Lower lobe of right lung (tissue), 2 donors: ENCODE measurements at regions of chr10 and their contacts with region 1.

Region 1: DNA sequence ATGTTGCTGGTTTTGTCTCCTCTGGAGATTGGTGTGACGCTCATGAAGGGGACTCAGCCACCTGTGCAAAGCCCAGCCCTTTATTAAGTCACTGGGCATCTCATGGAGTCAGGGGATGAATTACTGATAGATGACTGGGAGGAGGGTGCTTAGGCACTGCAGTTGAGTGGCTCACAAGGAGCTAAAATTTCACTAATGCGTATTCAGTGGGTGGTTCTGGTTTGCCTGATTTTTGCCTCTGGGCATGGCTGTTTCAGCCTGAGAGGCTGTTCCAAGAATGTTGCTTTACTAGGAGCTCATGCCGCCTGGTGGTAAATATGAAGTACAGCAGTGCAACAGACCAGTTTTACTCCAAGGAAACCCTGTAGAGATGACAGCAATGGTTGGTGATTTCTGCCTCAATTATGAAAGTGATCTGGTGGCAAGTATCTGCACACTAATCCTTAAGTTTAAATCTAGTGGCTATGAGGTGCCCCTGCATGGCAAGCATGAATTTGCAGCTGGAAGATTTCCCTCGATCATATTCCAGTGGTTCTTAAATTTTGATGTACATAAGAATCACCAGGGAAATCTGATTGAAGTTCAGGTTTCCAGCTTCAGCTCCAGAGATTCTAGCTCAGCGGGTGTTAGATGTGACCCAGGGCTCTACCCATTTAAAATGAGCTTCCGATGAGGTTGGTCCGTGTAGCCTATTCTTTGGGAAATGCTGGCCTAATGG is 19.9 kb downstream of the ACTA2 start:
- DNase-seq: no peak
- ATAC-seq: peak; percentile 88
- H3K4me3 ChIP-seq: no peak overlapping the region
- H3K27ac ChIP-seq: peak overlapping the region; percentile 37
- H3K4me1 ChIP-seq: peaks cover 24% of the 10 kb centered on the region
- H3K27me3 ChIP-seq: no peaks in the 10 kb centered on the region
- CTCF ChIP-seq: peak; percentile 86

Region 2: GRCh38 chr10:88835096-88835909 is 97.4 kb before region 1 on chr10:
- intact Hi-C with region 1: loop called (anchors 2 kb)
- DNase-seq: peak; percentile 84
- ATAC-seq: peak; percentile 94 to 96
- H3K4me3 ChIP-seq: no peak overlapping the region
- H3K27ac ChIP-seq: no peak overlapping the region
- H3K4me1 ChIP-seq: no peaks in the 10 kb centered on the region
- H3K27me3 ChIP-seq: no peaks in the 10 kb centered on the region
- CTCF ChIP-seq: peak; percentile 93

Region 3: GRCh38 chr10:88986549-88987242 is 54.0 kb after region 1 on chr10:
- intact Hi-C with region 1: loop called (anchors 10 kb)
- DNase-seq: no peak
- ATAC-seq: no peak
- H3K4me3 ChIP-seq: no peak overlapping the region
- H3K27ac ChIP-seq: no peak overlapping the region
- H3K4me1 ChIP-seq: peaks cover 53% of the 10 kb centered on the region
- H3K27me3 ChIP-seq: no peaks in the 10 kb centered on the region
- CTCF ChIP-seq: peak; percentile 80

Region 4: GRCh38 chr10:89086801-89087521 is 154.3 kb after region 1 on chr10:
- intact Hi-C with region 1: no loop called
- DNase-seq: peak; percentile 75
- ATAC-seq: peak; percentile 69 to 90
- H3K4me3 ChIP-seq: no peak overlapping the region
- H3K27ac ChIP-seq: peak overlapping the region; percentile 79
- H3K4me1 ChIP-seq: peaks cover 42% of the 10 kb centered on the region
- H3K27me3 ChIP-seq: no peaks in the 10 kb centered on the region
- CTCF ChIP-seq: no peak